A549 (cell line): ENCODE measurements at regions of chr3 and their contacts with region 1.

Region 1: DNA sequence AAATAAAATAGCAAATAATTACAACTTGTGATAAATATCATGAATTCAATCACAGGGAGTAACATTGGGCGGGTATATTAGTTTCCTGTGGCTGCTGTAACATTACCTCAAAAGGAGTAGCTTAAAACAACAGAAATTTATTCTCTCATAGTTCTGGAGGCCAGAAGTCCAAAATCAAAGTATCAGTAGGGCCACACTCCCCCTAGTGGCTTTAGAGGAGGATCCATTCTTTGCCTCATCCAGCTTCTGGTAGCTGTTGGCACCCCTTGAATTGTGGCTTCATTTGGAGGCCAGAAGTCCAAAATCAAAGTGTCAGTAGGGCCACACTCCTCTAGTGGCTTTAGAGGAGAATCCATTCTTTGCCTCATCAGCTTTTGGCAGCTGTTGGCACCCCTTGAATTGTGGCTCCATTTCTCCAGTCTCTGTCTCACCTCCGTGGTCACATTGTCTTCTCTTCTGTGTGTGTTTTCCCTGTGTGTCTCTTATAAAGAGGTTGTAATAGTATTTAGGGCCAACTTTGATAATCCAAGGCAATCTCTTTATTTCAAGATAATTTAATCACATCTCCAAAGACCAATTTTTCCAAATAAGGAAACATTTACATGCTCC is 3.1 kb upstream of the CFAP20DC start:
- DNase-seq: peak in 1 of 2 experiments; percentile 37
- ATAC-seq: peak in 1 of 2 experiments; percentile 37; a peak in 1 of 6 replicates
- H3K4me3 ChIP-seq: no peak overlapping the region
- H3K27ac ChIP-seq: no peak overlapping the region
- H3K4me1 ChIP-seq: peaks cover 11% of the 10 kb centered on the region; the same call in 2 of the 3 replicates
- CTCF ChIP-seq: peak; percentile 50
- EP300 ChIP-seq: no peak
- POLR2A ChIP-seq: no peak
- RAD21 ChIP-seq: peak; percentile 53 to 67; a peak in 4 of 5 replicates

Region 2: DNA sequence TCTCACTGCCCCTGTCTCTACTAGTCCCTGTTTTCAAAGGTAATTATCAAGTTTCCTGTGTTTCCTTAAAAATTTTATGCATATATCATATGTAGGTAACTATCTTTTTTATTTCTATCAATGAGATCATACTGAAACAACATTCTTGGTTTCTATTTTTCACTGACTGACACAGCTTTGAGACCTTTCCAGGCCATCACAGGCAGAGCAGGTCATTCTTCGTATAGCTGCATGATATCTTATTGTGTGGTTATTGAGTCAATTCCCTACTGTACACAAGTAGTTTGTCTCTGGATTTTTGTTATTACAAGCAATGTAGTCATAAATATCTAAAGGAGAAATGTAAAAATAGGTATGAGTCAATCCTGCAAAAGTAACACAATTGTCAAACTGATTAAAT is 172.7 kb before region 1 on chr3:
- CTCF ChIA-PET with region 1: no interaction called
- POLR2A ChIA-PET with region 1: no interaction called
- DNase-seq: no peak
- ATAC-seq: no peak
- H3K4me3 ChIP-seq: no peak overlapping the region
- H3K27ac ChIP-seq: no peak overlapping the region
- H3K4me1 ChIP-seq: peaks cover 2% of the 10 kb centered on the region; the same call in 2 of the 3 replicates
- CTCF ChIP-seq: no peak
- EP300 ChIP-seq: no peak
- POLR2A ChIP-seq: no peak
- RAD21 ChIP-seq: no peak

Region 3: GRCh38 chr3:58994746-58995330 is 58.1 kb before region 1 on chr3:
- CTCF ChIA-PET with region 1: interaction called, 19 read pairs
- POLR2A ChIA-PET with region 1: interaction called, 3 read pairs
- DNase-seq: peak; percentile 41 to 67
- ATAC-seq: peak; percentile 54 to 74; a peak in 4 of 6 replicates
- H3K4me3 ChIP-seq: no peak overlapping the region
- H3K27ac ChIP-seq: no peak overlapping the region
- H3K4me1 ChIP-seq: peaks cover 19% of the 10 kb centered on the region
- CTCF ChIP-seq: peak; percentile 70
- EP300 ChIP-seq: no peak
- POLR2A ChIP-seq: no peak
- RAD21 ChIP-seq: peak; percentile 77

Region 4: DNA sequence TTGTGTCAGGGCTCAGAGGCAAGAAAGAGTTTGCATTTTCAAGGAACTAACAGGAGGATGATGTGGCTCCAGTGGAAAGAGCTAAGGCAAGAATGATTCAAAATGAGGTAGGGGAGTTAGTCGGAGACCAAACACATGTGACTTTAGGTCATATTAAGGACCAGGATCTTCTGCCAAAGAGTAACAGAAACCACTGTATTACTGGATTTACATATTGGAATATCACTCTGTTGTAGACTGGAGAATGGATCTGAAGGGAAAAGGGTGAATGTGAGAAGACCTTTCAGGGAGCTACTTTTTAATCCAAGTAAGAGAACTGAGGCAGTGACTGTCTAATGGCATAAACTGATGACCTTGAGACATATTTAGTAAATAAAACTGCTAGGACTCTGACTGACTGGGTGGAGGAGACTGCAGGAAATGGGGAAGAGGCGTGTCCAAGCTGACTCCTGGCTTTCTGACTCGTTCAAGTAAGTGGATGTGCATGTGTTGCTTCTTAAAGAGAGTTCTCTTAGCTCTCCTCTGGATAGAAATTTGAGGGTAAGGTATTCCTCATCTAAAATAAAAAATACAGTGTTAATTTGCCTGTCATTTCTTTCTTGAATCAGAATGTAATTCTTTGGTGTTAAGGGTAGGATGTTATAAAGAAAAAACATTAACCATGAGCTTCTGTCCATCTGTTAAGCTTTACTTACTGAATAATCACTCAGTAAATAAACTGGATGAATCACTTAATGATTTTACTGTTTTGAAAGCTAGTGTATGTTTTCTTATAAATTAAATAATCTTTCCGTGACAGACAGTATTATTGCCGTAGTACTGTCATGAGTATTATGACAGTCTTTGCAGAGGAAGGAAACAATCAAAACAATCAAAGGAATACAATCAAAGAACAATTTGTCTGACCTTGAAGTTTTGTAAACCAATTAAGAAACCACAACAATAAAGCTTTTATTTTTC is 55.2 kb after region 1 on chr3:
- CTCF ChIA-PET with region 1: no interaction called
- POLR2A ChIA-PET with region 1: no interaction called
- DNase-seq: no peak
- ATAC-seq: no peak
- H3K4me3 ChIP-seq: no peak overlapping the region
- H3K27ac ChIP-seq: no peak overlapping the region
- H3K4me1 ChIP-seq: no peaks in the 10 kb centered on the region
- CTCF ChIP-seq: no peak
- EP300 ChIP-seq: no peak
- POLR2A ChIP-seq: no peak
- RAD21 ChIP-seq: no peak